Activated CD4-positive, alpha-beta T cell treated with anti-CD3 and anti-CD28 coated beads for 36 hours (primary cell): ENCODE measurements at regions of chr16 and their contacts with region 1.

Region 1: GRCh38 chr16:29694384-29695195 is 15.6 kb downstream of the QPRT start:
- DNase-seq: no peak
- ATAC-seq: no peak
- H3K4me3 Mint-ChIP-seq: no peak overlapping the region
- H3K27ac Mint-ChIP-seq: no peak overlapping the region
- H3K4me1 Mint-ChIP-seq: no peaks in the 10 kb centered on the region
- H3K27me3 Mint-ChIP-seq: no peaks in the 10 kb centered on the region

Region 2: GRCh38 chr16:30018731-30019158 is 324.2 kb after region 1 on chr16:
- CTCF ChIA-PET with region 1: no interaction called
- POLR2A ChIA-PET with region 1: no interaction called
- intact Hi-C with region 1: loop called in 1 of 2 experiments (anchors 1 kb)
- DNase-seq: no peak
- ATAC-seq: peak; percentile 36
- H3K4me3 Mint-ChIP-seq: no peak overlapping the region
- H3K27ac Mint-ChIP-seq: no peak overlapping the region
- H3K4me1 Mint-ChIP-seq: peaks cover 7% of the 10 kb centered on the region
- H3K27me3 Mint-ChIP-seq: no peaks in the 10 kb centered on the region